ENCODE measurements at regions of chr19 and their contacts with region 1.

Region 1: DNA sequence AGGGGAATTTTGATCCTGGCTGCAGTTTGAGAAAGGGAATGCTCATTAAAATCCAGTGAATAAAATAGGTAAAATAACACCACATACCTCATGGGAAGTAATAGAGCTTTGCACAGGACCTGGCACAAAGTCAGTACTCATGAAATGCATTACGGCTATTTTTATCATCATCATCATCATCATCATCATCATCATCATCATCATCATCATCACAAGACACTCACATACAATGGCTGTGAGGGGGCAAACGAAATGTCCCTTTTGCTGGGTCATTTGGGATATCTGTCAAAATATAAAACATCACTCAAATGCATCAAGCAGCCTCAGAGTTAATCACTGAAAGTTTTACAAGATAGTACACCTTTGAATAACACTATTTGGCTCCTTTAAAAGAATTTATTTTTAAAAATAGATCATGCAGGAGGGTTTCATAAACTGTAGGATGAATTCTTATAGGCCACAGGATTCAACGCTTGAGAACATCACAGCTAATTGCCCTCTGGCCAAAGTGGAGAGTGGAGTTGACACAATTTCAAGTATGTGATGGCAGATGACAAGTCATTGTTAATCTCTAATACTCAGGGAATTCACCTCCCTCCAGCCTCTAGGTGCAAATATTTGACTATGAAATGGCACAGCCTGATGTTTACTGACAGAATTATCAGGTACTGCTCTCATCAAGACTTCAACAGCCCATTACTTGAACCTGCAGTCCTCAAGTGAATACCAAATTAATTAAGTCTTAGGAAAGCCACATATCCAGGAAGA is 14.2 kb upstream of the ZNF599 start:
- DNase-seq: no peak
- ATAC-seq: no peak
- H3K4me3 ChIP-seq: no peak overlapping the region
- H3K27ac ChIP-seq: no peak overlapping the region
- H3K4me1 ChIP-seq: no peaks in the 10 kb centered on the region
- H3K27me3 ChIP-seq: peaks cover 0 to 4% of the 10 kb centered on the region in 2 experiments; a peak in 1 of 5 replicates
- CTCF ChIP-seq: no peak
- EP300 ChIP-seq: no peak
- POLR2A ChIP-seq: no peak
- RAD21 ChIP-seq: no peak

Region 2: GRCh38 chr19:34733826-34734600 is 53.2 kb before region 1 on chr19 and contains the start of gene ZNF181:
- CTCF ChIA-PET with region 1: no interaction called
- POLR2A ChIA-PET with region 1: no interaction called
- in situ Hi-C with region 1: no loop called
- intact Hi-C with region 1: no loop called
- DNase-seq: peak; percentile 86
- ATAC-seq: peak; percentile 92
- H3K4me3 ChIP-seq: peak within 1 kb of the TSS; percentile 75 to 79 (median 78)
- H3K27ac ChIP-seq: peak within 1 kb of the TSS; percentile 98
- H3K4me1 ChIP-seq: peaks cover 34% of the 10 kb centered on the region
- H3K27me3 ChIP-seq: no peaks in the 10 kb centered on the region; a peak in 1 of 5 replicates
- CTCF ChIP-seq: peak; percentile 41
- EP300 ChIP-seq: no peak
- POLR2A ChIP-seq: peak; percentile 75 to 81
- RAD21 ChIP-seq: peak; percentile 48; the same call in 1 of the 2 replicates
- total RNA-seq, gene ZNF181: 15.5 and 22.3 TPM in 2 replicates

Region 3: DNA sequence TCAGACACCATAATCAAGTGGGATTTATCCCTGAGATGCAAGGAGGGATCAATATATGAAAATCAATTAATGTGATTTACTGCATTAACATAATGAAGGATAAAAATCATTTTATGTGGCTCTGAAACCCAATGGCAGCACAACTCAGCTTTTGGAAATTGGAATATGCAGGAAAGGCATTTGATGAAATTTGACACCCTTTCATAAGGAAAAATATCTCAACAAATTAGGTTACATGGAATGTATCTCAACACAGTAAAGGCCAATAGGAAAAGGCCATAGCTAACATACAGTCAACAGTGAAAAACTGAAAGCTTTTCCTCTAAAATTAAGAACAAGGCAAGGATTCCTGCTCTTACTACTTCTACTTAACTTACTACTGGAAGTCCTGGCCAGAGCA is 107.5 kb after region 1 on chr19:
- CTCF ChIA-PET with region 1: no interaction called
- POLR2A ChIA-PET with region 1: no interaction called
- in situ Hi-C with region 1: loop called (anchors 10 kb)
- intact Hi-C with region 1: no loop called
- DNase-seq: no peak
- ATAC-seq: no peak
- H3K4me3 ChIP-seq: no peak overlapping the region
- H3K27ac ChIP-seq: no peak overlapping the region
- H3K4me1 ChIP-seq: no peaks in the 10 kb centered on the region
- H3K27me3 ChIP-seq: peaks cover 0 to 15% of the 10 kb centered on the region in 2 experiments; a peak in 2 of 5 replicates
- CTCF ChIP-seq: no peak
- EP300 ChIP-seq: no peak
- POLR2A ChIP-seq: no peak
- RAD21 ChIP-seq: no peak